Breast epithelium (tissue), 4 donors: ENCODE measurements at regions of chr2 and their contacts with region 1.

Region 1: GRCh38 chr2:16215902-16216557 is 275.7 kb downstream of the MYCN start:
- DNase-seq: no peak
- H3K4me3 ChIP-seq: no peak overlapping the region
- H3K27ac ChIP-seq: no peak overlapping the region
- H3K4me1 ChIP-seq: no peaks in the 10 kb centered on the region
- H3K27me3 ChIP-seq: no peaks in the 10 kb centered on the region
- CTCF ChIP-seq: no peak
- POLR2A ChIP-seq: no peak

Region 2: GRCh38 chr2:16179701-16180416 is 36.2 kb before region 1 on chr2:
- intact Hi-C with region 1: loop called (anchors 2 kb)
- DNase-seq: no peak
- H3K4me3 ChIP-seq: peak overlapping the region in 1 of 3 donors; percentile 11
- H3K27ac ChIP-seq: no peak overlapping the region
- H3K4me1 ChIP-seq: no peaks in the 10 kb centered on the region
- H3K27me3 ChIP-seq: no peaks in the 10 kb centered on the region
- CTCF ChIP-seq: no peak
- POLR2A ChIP-seq: no peak

Region 3: GRCh38 chr2:16281451-16282336 is 65.7 kb after region 1 on chr2:
- intact Hi-C with region 1: no loop called
- DNase-seq: no peak
- H3K4me3 ChIP-seq: no peak overlapping the region
- H3K27ac ChIP-seq: no peak overlapping the region
- H3K4me1 ChIP-seq: no peaks in the 10 kb centered on the region
- H3K27me3 ChIP-seq: no peaks in the 10 kb centered on the region
- CTCF ChIP-seq: peak in 2 of 3 donors; percentile 29 to 49
- POLR2A ChIP-seq: no peak